Transverse colon (tissue), 4 donors: ENCODE measurements at regions of chr2 and their contacts with region 1.

Region 1: GRCh38 chr2:6828299-6828584 is 37.5 kb downstream of the CMPK2 start:
- DNase-seq: no peak
- H3K4me3 ChIP-seq: no peak overlapping the region
- H3K27ac ChIP-seq: no peak overlapping the region
- H3K4me1 ChIP-seq: peaks cover 0 to 8% (median 2%) of the 10 kb centered on the region in 4 donors
- H3K27me3 ChIP-seq: no peaks in the 10 kb centered on the region
- CTCF ChIP-seq: peak in 4 of 5 experiments; percentile 28 to 48 (median 40)
- EP300 ChIP-seq: no peak
- POLR2A ChIP-seq: no peak

Region 2: GRCh38 chr2:6865346-6866274 is 37.4 kb after region 1 on chr2 and contains the start of gene CMPK2:
- in situ Hi-C with region 1: no loop called
- intact Hi-C with region 1: loop called (anchors 2 kb)
- DNase-seq: peak; percentile 85
- H3K4me3 ChIP-seq: peak within 1 kb of the TSS; percentile 65 to 98 (median 71)
- H3K27ac ChIP-seq: peak within 1 kb of the TSS; percentile 86 to 95 (median 91)
- H3K4me1 ChIP-seq: peaks cover 4 to 19% (median 12%) of the 10 kb centered on the region in 4 donors
- H3K27me3 ChIP-seq: no peaks in the 10 kb centered on the region
- CTCF ChIP-seq: no peak
- EP300 ChIP-seq: no peak
- POLR2A ChIP-seq: peak; percentile 18
- total RNA-seq, gene CMPK2: 4.9 to 22.9 (median 11.8) TPM